Left colon (tissue), 2 donors: ENCODE measurements at regions of chr2 and their contacts with region 1.

Region 1: DNA sequence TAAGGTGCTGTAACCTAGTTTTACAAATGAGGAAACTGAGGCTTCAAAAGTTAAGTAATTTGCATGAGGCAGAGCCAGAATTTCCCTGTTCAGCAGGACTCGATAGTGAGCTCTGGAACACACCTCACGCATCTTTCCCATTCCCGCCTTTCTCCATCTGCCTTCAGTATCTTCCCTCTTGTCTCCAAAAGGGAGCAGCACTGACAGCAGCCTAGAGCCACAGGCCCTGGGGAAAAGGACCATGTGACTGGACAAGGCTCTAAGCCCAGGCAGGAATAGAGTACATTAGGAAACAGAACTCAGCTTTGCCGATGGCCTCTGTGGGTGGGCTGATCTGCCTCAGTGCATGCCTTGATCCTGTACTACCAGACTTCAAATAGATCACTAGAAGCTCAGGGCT is 21.5 kb downstream of the GPR155 start:
- DNase-seq: no peak
- ATAC-seq: no peak

Region 2: DNA sequence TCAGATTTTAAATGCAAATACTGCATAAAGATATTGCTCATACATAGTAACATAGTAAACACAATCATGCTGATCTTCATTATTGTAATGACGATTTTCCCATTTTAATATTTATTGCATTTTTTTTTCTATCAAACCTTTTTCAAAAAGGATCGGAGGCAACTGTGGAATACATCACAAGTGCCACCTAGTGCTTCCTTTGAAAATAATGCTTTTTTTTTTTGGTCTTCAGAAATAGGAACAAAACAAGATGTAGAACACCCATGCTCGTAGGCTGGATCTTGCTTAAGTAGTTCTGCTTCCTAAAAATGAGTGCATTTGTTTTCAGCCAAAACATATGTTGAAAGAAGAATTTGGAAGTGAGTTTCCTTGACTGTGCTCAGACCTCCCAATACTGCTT is 57.2 kb after region 1 on chr2:
- intact Hi-C with region 1: loop called in 1 of 2 experiments (anchors 10 kb)
- DNase-seq: no peak
- ATAC-seq: no peak

Region 3: DNA sequence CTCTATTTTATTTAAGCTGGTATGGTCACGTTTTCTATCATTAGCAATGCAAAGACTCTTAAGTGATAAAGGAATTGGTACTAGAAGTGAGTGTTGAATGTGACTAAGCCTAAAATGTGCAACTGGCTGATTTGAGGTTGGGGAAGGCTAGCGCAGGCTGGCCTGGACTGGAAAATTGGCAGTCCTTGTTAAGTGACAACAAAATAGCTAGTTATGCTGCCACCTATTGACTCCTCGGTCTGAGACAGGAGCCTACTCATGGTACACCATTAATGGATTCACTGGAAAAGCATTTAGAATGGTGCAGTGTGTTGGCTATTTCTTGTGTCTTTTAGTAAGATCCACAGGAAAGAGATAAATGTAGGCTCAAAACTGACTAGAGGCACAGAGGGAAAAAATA is 138.0 kb after region 1 on chr2:
- intact Hi-C with region 1: loop called in 1 of 2 experiments (anchors 5 kb)
- DNase-seq: peak; percentile 40 to 42
- ATAC-seq: peak; percentile 68

Region 4: DNA sequence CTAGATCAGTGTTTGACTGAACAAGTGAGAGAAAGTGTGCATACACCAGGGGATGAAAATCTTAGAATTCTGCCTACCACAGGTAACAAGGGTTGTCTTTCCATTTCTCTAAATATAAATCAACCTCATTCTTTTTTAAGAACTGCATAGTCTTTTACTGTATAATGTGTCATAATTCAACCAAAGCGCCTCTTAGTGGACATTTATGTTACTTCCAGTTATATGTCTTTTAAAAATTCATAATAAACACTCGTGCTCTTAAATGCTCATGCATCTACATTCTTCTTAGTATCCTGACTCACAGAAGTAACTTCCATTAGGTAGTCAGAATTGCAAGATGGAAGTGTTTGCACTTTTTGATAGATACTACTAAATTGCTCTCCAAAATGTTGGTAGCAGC is 222.8 kb after region 1 on chr2:
- intact Hi-C with region 1: loop called in 1 of 2 experiments (anchors 5 kb)
- DNase-seq: no peak
- ATAC-seq: no peak